ENCODE measurements at regions of chrX and their contacts with region 1.

Region 1: DNA sequence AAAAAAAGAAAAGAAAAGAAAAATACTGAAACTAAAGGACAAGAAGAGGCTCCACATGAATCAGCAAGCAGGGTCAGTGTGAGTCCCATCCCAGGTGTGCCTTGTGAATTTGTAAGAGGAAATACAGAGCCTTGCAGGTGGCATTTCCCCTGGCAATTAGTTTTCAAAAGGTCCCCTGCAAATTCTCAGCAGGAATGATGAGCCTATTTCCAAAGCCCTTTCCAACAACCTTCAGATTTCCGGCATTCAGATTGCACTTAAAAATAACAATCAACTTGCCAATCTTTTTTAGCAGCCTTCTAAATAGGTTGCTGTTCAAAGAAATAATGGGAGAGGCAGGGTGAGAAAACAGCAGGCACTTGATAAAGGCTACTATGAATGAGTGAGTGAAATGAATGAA is 66.4 kb upstream of the OR13H1 start:
- DNase-seq: no peak
- H3K4me3 ChIP-seq: no peak overlapping the region
- H3K27ac ChIP-seq: no peak overlapping the region
- H3K4me1 ChIP-seq: no peaks in the 10 kb centered on the region
- H3K27me3 ChIP-seq: no peaks in the 10 kb centered on the region
- CTCF ChIP-seq: no peak
- POLR2A ChIP-seq: no peak

Region 2: GRCh38 chrX:131216828-131217227 is 260.7 kb before region 1 on chrX:
- CTCF ChIA-PET with region 1: no interaction called
- POLR2A ChIA-PET with region 1: no interaction called
- dilution Hi-C with region 1: no loop called
- intact Hi-C with region 1: loop called (anchors 5 kb)
- DNase-seq: no peak
- H3K4me3 ChIP-seq: no peak overlapping the region
- H3K27ac ChIP-seq: no peak overlapping the region
- H3K4me1 ChIP-seq: no peaks in the 10 kb centered on the region
- H3K27me3 ChIP-seq: no peaks in the 10 kb centered on the region
- CTCF ChIP-seq: no peak
- POLR2A ChIP-seq: no peak